Left ventricle myocardium superior (tissue), 1 donor: ENCODE measurements at regions of chr12 and their contacts with region 1.

Region 1: DNA sequence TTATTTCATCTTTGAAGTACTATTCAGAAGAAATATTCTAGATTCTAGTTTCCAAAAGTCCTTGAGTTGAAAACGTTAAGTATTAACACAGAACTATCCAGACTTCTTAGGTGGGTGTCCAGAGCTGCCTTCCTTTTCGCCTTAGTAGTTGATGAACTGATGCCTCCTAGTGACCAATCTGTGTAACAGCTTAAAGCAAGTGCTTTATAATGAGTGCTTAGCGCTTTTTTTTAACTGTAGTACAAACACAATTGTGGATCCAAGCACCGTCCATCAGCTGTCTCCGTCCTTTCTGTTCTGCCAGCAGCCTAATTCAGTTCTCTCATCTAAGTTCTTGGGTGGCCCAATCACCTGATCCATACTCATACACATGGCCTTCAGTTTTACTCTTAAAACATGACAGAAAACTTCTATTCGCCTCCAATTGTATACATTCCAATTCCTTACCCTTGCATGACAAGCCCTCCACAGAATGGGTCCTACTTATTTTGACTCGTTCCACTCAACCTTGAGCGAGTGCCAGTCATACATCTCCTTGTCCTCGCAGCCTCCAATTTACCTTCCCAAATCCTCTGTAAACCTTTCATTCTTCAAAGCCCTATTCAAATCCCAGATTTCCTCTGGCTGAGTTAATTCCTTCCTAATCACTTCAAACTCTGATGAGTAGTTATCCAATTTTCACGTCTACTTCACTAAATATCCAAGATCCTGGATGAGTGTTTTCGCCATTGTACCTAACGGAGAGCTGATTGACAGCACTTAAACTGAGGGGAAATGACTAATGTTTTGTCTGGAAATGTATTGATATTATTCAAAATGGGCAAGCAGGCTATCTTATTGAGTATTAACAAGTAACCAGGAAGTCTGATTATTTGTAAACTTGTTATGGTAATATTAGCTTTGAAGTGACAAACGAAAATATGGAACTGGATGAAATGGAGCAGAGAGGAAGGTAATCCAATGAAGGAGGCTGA is 5.8 kb upstream of the PHLDA1 start:
- DNase-seq: no peak
- ATAC-seq: peak; percentile 73

Region 2: GRCh38 chr12:75526655-75527511 is 510.5 kb before region 1 on chr12:
- intact Hi-C with region 1: loop called (anchors 5 kb)
- DNase-seq: no peak
- ATAC-seq: peak; percentile 28